ENCODE measurements at regions of chr5 and their contacts with region 1.

Region 1: DNA sequence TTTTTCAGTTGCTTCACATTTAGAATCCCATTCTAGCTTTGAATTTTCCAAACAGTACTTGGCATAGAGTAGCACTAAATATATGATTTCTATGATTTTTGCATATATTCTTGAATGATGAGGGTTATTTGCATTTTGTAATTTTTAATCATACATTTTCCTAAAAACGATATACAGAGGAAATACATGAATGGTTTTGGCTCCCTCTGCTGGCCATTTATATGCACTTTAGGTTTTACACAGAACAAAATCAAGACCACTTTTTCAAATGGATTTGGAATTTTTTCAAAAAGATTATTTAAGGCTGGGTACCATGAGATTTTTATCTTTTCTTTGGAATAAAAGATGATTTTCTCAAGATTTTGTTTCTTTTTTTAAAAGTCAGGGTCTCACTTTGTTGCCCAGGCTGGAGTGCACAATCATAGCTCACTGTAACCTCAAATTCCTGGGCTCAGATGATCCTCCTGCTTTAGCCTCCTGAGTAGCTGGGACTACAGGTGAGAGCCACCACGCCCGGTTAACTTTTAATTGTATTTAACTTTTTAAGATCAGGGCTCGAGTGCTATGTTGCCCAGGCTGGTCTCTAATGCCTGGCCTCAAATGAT is 16.7 kb upstream of the COMMD10 start:
- DNase-seq: no peak
- ATAC-seq: peak in 1 of 4 donors; percentile 72
- H3K4me3 ChIP-seq: no peak overlapping the region
- H3K27ac ChIP-seq: no peak overlapping the region
- H3K4me1 ChIP-seq: no peaks in the 10 kb centered on the region
- H3K27me3 ChIP-seq: no peaks in the 10 kb centered on the region
- CTCF ChIP-seq: peak; percentile 86

Region 2: DNA sequence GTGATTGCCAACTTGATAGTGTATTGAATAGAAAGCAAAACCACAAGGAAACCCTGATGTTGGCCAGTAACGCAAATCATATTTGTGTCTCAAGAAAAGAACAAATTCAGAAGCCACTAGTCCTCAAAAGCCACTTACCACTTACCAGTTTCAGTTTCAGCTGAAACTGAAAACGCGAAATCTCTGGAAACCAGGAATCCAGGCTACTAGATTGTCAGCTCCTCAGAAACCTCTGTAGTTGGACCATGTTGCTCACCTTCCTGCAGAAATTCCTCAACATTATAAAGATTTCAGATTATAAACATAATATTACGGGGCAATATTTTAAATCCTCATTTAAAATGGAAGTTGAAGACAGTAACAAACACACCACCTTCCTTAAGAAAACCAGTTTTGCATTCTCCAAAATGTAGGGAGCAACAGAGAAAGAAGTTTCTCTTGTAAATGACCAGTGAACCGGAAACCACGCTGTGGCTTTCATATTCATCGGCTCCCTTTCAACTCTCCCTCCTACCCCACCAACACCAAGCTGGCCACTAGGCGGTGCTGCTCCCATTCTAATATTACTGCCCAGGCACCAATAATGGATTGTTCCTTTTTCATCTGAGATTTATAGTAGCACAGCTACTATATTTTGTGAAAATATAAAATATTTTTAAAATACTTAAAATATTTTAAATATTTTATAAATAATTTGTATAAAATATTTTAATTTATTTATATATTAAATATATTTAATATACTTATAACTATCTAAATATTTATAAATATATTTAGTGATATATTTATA is 433.6 kb before region 1 on chr5:
- intact Hi-C with region 1: loop called (anchors 2 to 5 kb)
- DNase-seq: peak; percentile 86 to 91
- ATAC-seq: peak; percentile 83 to 100 (median 97)
- H3K4me3 ChIP-seq: peak overlapping the region; percentile 56
- H3K27ac ChIP-seq: peak overlapping the region; percentile 46
- H3K4me1 ChIP-seq: no peaks in the 10 kb centered on the region
- H3K27me3 ChIP-seq: no peaks in the 10 kb centered on the region
- CTCF ChIP-seq: peak; percentile 94

Region 3: GRCh38 chr5:115898656-115899055 is 169.5 kb before region 1 on chr5:
- intact Hi-C with region 1: loop called in 1 of 2 experiments (anchors 10 kb)
- DNase-seq: no peak
- ATAC-seq: no peak
- H3K4me3 ChIP-seq: no peak overlapping the region
- H3K27ac ChIP-seq: no peak overlapping the region
- H3K4me1 ChIP-seq: no peaks in the 10 kb centered on the region
- H3K27me3 ChIP-seq: no peaks in the 10 kb centered on the region
- CTCF ChIP-seq: no peak

Measured in psoas muscle (tissue), 8 donors.